ENCODE measurements at regions of chr9 and their contacts with region 1.

Region 1: DNA sequence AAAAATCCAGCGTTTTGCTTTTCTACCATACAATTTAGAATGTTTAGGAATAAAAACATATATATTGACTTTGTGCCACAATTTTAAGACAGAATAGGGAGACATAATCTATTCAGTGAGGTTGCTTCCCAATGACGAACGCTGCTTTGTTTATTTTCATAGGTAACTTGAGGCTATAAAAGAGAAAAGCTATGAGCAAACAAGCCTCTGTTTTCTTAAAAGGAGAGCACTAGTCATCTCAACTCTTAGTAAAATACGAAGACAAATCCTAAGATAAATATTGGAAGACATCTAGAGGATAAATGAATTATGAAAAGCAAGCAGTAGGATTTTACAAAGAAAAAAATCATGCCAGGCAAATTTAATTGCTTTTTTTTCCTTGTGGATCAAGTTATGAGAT is 363.6 kb downstream of the ANXA1 start:
- DNase-seq: no peak
- H3K4me3 ChIP-seq: no peak overlapping the region
- H3K27ac ChIP-seq: no peak overlapping the region
- H3K4me1 ChIP-seq: no peaks in the 10 kb centered on the region
- H3K27me3 ChIP-seq: no peaks in the 10 kb centered on the region
- CTCF ChIP-seq: no peak

Region 2: DNA sequence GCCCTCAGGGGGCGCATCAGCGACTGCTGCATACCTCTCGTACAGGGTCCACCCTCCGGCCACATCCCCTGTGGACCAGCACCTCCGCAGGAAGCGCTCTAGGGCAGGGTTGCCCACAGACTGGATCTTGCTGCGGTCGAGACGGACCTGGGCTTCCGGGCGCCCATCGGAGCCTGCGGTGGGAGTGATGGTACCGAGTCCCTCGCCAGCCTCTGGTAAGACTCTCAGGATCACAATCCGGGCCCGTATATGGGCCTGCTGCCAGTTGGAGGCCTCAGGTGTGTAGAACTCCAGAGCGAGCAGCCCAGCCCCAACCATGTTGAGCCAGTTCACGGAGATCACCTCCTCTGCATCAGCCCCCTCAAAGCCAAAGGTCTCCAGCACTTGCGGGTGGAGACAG is 40.6 kb before region 1 on chr9:
- CTCF ChIA-PET with region 1: no interaction called
- dilution Hi-C with region 1: loop called (anchors 5 kb)
- in situ Hi-C with region 1: no loop called
- intact Hi-C with region 1: no loop called
- DNase-seq: no peak
- H3K4me3 ChIP-seq: no peak overlapping the region
- H3K27ac ChIP-seq: no peak overlapping the region
- H3K4me1 ChIP-seq: no peaks in the 10 kb centered on the region
- H3K27me3 ChIP-seq: no peaks in the 10 kb centered on the region
- CTCF ChIP-seq: no peak

Measured in mammary epithelial cell (primary cell).